ENCODE measurements at regions of chr20 and their contacts with region 1.

Region 1: GRCh38 chr20:24160563-24161375 is 172.2 kb upstream of the GGTLC1 start:
- DNase-seq: peak; percentile 55
- ATAC-seq: no peak
- H3K4me3 Mint-ChIP-seq: no peak overlapping the region
- H3K27ac Mint-ChIP-seq: no peak overlapping the region
- H3K4me1 Mint-ChIP-seq: no peaks in the 10 kb centered on the region
- H3K27me3 Mint-ChIP-seq: no peaks in the 10 kb centered on the region

Region 2: DNA sequence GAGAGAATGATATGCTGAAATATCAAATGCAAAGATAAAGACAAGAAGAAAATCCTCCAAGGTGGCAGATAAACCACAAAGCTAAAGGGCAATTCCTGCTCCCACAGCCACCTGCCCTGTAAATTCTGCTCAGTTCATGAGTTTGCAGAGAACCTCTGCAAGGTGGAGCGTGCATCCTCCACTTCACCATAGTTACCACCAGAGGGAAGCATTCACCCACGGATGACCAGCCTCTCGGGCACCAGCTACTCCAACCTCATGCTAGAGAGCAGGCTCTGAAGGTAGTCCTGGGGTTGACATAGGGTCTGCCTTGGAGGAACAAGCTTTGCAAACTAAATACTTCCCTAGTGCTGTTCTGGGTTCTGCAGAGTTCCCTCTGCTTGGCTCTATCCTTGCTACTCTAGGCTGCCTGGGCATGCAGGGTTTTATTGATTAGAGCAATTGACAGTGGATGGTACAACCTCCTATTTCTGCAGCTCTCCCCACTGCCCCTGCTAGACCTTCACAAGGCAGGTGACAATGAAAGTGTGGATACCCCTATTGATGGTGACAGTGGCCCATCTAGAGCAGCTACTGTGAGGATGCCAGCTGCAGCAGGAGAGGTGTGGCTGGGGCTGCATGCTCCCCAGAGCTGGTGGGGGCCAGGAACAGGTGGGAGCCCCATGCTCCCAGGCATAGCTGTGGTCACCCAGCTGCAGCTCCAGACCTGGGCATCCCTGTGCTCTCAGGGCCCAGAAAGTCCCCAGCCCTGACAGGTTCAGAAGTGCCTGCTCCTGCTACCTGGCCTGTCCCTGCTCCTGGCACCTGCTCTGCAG is 223.3 kb before region 1 on chr20:
- CTCF ChIA-PET with region 1: interaction called, 4 read pairs
- POLR2A ChIA-PET with region 1: no interaction called
- intact Hi-C with region 1: loop called (anchors 1 to 2 kb)
- DNase-seq: peak; percentile 74
- ATAC-seq: peak; percentile 90
- H3K4me3 Mint-ChIP-seq: no peak overlapping the region
- H3K27ac Mint-ChIP-seq: no peak overlapping the region
- H3K4me1 Mint-ChIP-seq: no peaks in the 10 kb centered on the region
- H3K27me3 Mint-ChIP-seq: no peaks in the 10 kb centered on the region

Region 3: DNA sequence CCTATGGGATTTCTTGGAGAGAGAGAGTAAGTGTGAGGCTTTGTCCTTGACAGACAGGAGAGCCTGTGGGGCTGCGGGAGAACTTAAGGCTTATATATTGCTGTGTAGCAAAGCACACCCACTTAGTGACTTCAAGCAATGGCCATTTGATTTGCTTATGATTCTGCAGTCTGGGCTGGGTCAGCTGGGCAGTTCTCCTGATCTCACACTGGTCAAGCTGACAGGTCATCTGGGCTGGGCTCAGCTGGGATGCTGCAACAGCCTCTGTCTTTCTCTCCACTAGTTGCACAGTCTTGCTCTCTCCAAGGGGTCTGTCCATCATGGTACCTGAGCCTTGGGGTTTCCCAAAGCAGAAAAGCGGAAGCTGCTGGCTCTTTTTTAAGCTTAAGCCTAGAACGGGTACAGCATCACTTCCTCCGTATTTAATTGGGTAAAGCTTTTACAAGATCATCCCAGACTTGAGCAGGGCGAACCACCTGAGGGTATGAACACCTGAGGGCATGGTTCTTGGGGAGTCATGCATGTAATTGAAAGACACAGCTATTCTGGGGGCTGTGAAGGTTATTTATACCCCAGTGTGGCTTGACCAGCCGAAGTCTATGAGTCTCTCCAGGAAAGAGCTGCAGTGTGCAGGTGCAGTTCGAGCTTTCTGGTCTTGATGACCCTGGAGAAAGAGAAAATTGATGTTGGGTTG is 158.9 kb before region 1 on chr20:
- CTCF ChIA-PET with region 1: no interaction called
- POLR2A ChIA-PET with region 1: no interaction called
- intact Hi-C with region 1: loop called in 1 of 2 experiments (anchors 5 kb)
- DNase-seq: no peak
- ATAC-seq: no peak
- H3K4me3 Mint-ChIP-seq: no peak overlapping the region
- H3K27ac Mint-ChIP-seq: no peak overlapping the region
- H3K4me1 Mint-ChIP-seq: no peaks in the 10 kb centered on the region
- H3K27me3 Mint-ChIP-seq: no peaks in the 10 kb centered on the region

Region 4: DNA sequence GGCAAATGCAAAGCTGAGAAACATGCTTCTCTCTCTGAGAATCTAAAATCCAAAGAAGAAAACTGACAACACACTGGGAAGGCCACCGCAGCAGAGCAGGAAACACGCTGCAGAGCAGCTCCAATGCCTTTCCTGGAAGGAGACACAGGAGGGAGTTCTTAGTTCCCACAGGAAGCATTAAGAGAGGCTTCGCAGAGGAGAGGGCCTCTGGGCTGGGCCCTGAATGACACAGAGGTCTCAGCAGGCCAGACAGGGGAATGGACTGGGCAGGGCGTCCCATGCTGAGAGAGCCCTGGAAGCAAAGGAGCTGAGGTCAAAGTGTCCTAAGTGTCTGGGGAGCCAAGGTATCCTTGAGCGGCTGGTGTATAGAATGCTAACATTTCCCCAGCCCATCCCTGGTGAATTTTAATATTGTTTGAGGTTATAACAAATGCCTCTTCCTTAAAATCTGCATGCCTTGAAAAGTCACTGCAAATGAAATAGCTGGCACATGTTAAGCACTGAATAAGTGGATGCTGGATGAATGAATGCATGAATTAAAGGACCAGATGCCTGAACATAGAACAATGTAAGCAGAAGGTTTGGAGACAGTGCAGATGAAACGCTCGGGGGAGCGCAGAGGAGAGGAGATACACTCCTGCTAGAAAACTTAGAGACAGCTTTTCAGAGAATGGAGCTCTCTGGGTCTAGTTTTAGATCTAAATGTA is 198.7 kb after region 1 on chr20:
- CTCF ChIA-PET with region 1: no interaction called
- POLR2A ChIA-PET with region 1: no interaction called
- intact Hi-C with region 1: no loop called
- DNase-seq: no peak
- ATAC-seq: no peak
- H3K4me3 Mint-ChIP-seq: no peak overlapping the region
- H3K27ac Mint-ChIP-seq: no peak overlapping the region
- H3K4me1 Mint-ChIP-seq: peaks cover 4% of the 10 kb centered on the region
- H3K27me3 Mint-ChIP-seq: peaks cover 4% of the 10 kb centered on the region